Right cardiac atrium (tissue), 5 donors: ENCODE measurements at regions of chr7 and their contacts with region 1.

Region 1: GRCh38 chr7:992709-993607 is 10.0 kb downstream of the CYP2W1 start:
- DNase-seq: peak; percentile 98 to 99 (median 99)
- ATAC-seq: peak; percentile 95
- H3K4me3 ChIP-seq: no peak overlapping the region
- H3K27ac ChIP-seq: no peak overlapping the region
- H3K4me1 ChIP-seq: no peaks in the 10 kb centered on the region
- H3K27me3 ChIP-seq: no peaks in the 10 kb centered on the region

Region 2: GRCh38 chr7:1040790-1041189 is 47.8 kb after region 1 on chr7:
- intact Hi-C with region 1: no loop called
- DNase-seq: peak in 2 of 3 donors; percentile 76 to 77
- ATAC-seq: no peak
- H3K4me3 ChIP-seq: no peak overlapping the region
- H3K27ac ChIP-seq: no peak overlapping the region
- H3K4me1 ChIP-seq: peaks cover 9% of the 10 kb centered on the region
- H3K27me3 ChIP-seq: no peaks in the 10 kb centered on the region

Region 3: DNA sequence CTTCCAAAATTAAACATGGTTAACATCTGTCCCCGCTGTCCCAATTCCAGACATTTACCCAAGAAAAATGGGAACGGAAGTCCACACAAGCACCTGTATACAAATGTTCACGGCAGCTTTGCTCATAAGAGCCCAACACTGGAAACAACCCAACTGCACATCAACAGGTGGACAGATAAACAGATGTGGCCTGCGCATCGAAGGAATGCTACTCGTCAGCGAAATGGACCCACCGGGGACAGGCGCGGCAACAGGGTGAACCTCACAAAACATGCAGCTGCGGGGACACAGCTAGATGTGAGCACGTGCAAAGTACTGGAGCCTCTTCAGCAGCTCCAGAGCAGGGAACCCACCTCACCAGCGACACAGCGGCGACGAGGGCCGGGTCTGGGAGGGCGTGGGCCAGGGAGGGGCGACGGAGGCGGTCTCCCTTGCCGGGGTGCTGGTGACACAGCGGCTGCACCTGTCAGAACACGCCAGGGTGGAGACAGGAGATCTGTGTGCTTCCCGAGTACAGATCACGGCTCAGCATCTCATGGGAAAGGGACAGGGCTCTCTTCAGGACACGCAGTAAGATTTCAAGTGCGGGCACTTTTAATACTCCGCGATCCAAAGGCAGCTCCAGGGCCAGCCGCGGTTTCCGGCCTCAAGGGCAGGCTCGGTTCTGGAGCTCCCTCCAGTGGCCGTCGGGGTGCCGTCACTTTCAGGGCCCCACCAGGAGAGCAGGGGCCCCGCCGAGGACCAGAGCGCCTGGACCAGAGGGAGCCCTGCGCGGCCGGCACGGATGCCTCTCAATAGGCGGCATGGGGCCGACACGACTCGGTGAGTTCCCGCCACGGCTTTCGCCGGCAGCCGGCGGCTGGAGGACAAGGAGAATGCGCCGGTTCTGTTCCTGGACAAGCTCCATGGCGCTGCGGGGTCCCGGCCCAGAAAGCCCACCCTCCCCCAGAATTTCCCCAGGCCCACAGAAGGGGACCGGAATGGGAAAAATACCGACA is 72.6 kb after region 1 on chr7:
- intact Hi-C with region 1: loop called (anchors 1 to 2 kb)
- DNase-seq: peak; percentile 88 to 95 (median 95)
- ATAC-seq: peak; percentile 91 to 92
- H3K4me3 ChIP-seq: no peak overlapping the region
- H3K27ac ChIP-seq: no peak overlapping the region
- H3K4me1 ChIP-seq: no peaks in the 10 kb centered on the region
- H3K27me3 ChIP-seq: no peaks in the 10 kb centered on the region

Region 4: DNA sequence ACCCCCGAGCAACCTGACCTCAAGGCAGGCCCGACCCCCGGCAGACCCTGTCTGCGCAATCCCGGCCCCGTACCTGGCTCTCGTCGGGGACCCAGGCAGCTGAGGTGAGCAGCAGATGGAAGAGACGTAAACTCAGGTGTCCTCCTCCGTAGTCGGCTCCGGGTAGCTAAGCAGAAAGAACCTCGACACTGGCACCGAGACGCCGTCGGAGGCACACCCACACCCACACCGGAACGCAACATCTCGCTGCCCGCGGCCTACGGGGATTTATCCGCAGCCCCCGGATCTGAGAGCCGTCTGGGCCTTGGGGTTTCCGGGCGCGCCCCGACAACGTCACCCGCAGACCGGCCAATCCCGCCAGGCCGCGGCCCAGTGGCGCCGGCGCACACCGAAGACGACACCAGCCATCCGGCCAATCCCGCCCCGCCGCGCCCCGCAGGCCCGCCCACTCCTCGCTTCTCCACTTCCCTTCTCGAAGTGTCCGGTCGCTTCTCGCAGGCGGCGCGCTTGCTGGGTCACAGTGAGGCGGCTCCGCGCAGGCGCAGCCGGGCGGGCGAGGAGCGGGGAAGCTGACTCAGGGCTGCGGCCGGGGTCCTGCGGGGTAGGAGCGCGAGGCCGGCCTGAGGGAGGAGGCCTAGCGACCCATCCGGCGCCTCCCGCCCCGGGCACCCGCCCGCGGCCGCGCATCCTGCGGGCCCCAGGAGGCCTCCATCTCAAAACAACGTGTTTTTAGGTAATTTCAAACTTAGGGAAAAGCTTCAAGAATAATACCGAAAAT is 167.1 kb after region 1 on chr7 and contains the start of gene ZFAND2A:
- intact Hi-C with region 1: loop called in 2 of 4 experiments (anchors 10 kb)
- DNase-seq: peak; percentile 99 to 100 (median 100)
- ATAC-seq: peak; percentile 99
- H3K4me3 ChIP-seq: peak within 1 kb of the TSS; percentile 66
- H3K27ac ChIP-seq: peak within 1 kb of the TSS; percentile 76
- H3K4me1 ChIP-seq: no peaks in the 10 kb centered on the region
- H3K27me3 ChIP-seq: no peaks in the 10 kb centered on the region
- total RNA-seq, gene ZFAND2A: 8.9 to 13.2 (median 11.5) TPM